Activated CD4-positive, alpha-beta T cell treated with anti-CD3 and anti-CD28 coated beads, Interleukin-2, amount 10 ng/mL, durations not matched to agents 24 days and 14 days (primary cell): ENCODE measurements at regions of chr17 and their contacts with region 1.

Region 1: DNA sequence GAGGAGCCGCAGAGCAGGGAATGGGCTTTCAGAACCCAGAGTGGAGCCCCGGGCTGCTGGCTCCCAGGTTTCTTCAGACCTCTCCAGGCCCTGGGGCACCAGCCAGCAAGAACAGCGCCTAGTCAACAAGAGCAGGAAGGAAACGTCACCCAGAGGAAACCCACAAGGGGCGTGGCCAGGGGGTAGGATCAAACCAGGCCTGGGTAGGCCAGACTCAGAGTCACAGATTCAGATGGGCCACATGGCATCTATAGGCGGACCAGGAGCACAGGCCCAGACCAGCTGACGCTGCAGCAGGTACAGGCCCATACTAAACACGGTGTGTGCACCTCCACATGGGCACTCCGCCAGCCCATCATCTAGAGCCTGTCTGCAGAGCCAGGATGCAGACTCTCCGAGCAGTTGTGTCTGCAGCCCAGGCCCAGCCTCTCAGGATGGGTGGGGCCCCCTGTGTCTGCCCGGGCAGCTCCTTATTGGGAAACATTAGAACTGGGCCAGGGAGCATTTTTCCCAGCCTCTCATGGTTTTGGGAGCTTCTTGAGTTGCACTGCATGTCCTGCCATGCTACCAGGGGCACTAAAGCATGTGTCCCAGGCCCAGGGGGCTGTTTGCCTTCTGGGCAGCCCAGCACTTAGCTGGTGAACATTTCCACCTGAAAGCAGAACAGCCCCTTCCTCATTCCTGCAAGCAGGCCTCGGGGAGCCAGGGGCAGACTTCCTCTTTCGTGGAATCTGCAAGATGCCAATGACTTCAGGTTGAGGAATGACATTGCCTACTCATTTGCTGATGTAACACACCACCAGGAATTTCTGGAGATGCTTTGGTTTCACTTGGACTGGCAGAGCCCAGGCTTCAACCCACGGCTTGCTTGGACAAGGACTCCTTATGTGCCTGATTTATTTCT is at the start of gene NLRP1:
- DNase-seq: peak; percentile 98
- H3K4me3 Mint-ChIP-seq: peak within 1 kb of the TSS; percentile 97
- H3K27ac Mint-ChIP-seq: peak within 1 kb of the TSS; percentile 96
- H3K4me1 Mint-ChIP-seq: peaks cover 53% of the 10 kb centered on the region
- H3K27me3 Mint-ChIP-seq: peaks cover 6% of the 10 kb centered on the region
- total RNA-seq, gene NLRP1: 19.6 and 23.0 TPM in 2 replicates

Region 2: DNA sequence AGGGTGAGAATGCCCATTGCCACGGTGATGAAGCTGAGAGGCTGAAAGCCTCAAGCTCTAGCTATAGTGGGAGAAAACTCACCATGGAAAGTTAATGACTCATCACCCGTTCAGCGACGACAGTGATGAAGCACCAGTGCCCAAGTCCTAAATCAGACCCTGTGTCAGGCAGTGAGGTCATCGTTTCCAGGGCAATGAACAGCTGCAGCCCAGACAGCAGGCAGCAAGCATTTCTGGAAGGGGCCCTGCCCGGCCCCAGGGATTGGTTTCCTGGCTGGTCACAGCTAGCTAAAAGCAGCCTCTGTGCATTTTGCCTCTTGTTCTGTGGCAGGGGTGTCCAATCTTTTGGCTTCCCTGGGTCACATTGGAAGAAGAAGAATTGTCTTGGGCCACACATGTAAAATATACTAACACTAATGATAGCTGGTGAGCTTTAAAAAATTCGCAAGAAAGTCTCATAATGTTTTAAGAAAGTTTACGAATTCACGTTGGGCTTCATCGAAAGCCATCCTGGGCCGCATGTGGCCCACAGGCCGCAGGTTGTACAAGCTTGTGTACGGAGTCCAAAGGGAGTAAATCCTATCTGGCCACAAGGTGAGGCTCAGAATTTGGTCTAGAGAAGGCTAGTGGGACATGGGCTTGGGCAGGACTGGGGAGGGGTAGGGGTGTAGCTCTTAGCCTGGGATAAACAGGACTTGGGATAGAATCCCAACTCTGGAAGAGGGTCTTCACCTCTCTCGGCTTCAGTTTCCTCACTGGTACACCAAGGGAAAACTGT is 57.6 kb before region 1 on chr17:
- intact Hi-C with region 1: loop called (anchors 1 kb)
- DNase-seq: peak; percentile 74
- H3K4me3 Mint-ChIP-seq: no peak overlapping the region
- H3K27ac Mint-ChIP-seq: peak overlapping the region; percentile 88
- H3K4me1 Mint-ChIP-seq: peaks cover 10% of the 10 kb centered on the region
- H3K27me3 Mint-ChIP-seq: no peaks in the 10 kb centered on the region

Region 3: DNA sequence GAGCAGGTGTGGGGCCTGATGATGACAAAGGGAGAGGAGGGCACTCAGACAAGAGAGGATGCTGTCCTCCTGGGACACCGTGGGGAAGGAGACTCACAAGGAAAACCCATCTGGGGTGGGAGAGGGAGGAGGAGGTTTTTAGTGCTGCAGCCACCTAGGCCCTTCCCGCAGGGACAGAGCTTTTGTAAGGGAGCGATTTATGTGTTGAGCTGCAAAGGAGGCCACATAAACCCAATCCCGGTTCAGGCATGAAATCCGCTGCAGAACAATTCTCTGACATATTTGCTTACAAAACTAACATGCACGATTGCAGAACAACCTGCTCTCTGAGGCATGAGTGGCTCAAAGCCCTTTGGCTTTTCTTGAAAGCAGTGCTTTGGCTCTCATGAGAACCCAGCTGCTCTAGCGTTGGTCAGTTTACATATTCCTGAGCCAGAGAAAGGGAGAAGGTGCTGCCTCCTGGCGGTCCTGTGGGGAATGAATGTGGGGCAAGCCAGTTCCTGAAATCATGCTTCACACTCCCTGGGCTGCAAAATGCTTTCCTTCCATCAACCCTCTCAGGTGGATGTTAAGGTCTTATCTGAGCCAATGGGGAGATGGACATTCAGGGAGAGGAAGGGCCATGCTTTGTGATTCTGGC is 122.1 kb after region 1 on chr17:
- intact Hi-C with region 1: loop called (anchors 1 kb)
- DNase-seq: peak; percentile 83
- H3K4me3 Mint-ChIP-seq: no peak overlapping the region
- H3K27ac Mint-ChIP-seq: no peak overlapping the region
- H3K4me1 Mint-ChIP-seq: no peaks in the 10 kb centered on the region
- H3K27me3 Mint-ChIP-seq: peaks cover 9% of the 10 kb centered on the region

Region 4: DNA sequence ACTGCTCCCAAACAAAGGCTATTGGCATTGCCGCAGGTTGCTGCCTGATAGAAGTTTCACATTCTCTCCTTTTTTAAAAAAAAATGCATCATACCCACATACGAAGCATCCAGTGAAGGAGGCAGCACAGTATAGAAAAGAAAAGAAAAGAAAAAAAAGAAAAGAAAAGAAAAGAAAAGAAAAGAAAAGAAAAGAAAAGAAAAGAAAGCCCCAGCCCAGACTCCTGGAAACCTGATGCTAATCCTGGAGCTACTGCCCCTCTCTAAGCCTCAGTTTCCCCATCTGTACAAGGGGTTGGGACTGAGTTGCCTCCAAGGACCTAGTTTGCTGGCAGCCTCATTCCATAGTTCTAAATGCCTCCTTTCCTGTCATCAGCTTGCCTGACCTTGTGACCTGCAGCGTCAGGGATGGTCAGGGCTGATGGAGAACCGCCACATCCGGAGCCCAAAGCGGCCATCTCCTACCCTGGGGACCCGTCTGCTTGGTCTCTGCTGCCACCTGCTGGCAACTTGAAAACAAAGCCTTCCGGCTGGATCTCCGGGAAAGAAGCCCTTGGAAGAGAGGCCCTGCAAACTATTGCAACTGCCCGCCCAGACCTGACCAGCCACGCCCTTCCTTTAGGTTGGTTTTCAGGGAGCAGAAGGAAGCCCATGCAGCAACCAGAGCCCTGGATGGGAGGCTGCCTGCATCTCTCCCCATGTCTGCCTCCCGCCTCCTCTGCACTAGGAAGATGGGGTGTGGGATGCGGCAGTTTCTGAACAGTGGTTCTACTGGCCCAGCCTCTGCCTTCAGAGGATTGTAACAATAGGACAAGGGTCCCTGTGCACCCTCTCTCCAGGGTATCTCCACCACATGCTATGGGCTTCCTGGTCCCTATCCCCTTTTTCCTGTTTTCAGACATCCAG is 837.3 kb after region 1 on chr17:
- intact Hi-C with region 1: loop called (anchors 1 kb)
- DNase-seq: peak; percentile 91
- H3K4me3 Mint-ChIP-seq: no peak overlapping the region
- H3K27ac Mint-ChIP-seq: no peak overlapping the region
- H3K4me1 Mint-ChIP-seq: peaks cover 3% of the 10 kb centered on the region
- H3K27me3 Mint-ChIP-seq: peaks cover 48% of the 10 kb centered on the region

Region 5: DNA sequence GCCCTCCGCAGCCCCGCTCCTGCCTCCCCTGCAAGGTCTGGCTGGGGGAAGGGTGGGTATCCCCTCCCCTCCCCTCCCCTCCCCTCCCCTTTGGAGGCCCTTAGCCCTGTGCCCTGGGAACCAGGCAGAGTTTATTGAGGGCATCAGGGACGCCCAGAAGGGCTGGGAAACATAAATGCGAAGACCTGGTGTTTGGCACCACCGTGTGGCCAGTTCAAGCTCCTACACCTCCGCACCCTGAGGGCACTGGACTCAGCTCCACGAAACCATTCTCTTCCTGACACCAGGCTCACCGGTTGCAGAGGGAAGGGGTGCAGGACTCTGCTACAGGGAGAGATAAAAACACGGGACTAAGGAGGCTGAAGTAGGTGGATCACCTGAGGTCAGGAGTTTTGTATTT is 851.3 kb after region 1 on chr17:
- intact Hi-C with region 1: loop called (anchors 5 kb)
- DNase-seq: peak; percentile 89
- H3K4me3 Mint-ChIP-seq: no peak overlapping the region
- H3K27ac Mint-ChIP-seq: no peak overlapping the region
- H3K4me1 Mint-ChIP-seq: peaks cover 2% of the 10 kb centered on the region
- H3K27me3 Mint-ChIP-seq: peaks cover 63% of the 10 kb centered on the region